ENCODE measurements at regions of chr17 and their contacts with region 1.

Region 1: GRCh38 chr17:48351831-48352332 is 78.1 kb downstream of the SKAP1 start:
- DNase-seq: peak; percentile 16
- H3K4me3 ChIP-seq: no peak overlapping the region
- H3K27ac ChIP-seq: no peak overlapping the region
- H3K4me1 ChIP-seq: peaks cover 3% of the 10 kb centered on the region
- H3K27me3 ChIP-seq: peaks cover 3% of the 10 kb centered on the region
- CTCF ChIP-seq: peak; percentile 51 to 68

Region 2: DNA sequence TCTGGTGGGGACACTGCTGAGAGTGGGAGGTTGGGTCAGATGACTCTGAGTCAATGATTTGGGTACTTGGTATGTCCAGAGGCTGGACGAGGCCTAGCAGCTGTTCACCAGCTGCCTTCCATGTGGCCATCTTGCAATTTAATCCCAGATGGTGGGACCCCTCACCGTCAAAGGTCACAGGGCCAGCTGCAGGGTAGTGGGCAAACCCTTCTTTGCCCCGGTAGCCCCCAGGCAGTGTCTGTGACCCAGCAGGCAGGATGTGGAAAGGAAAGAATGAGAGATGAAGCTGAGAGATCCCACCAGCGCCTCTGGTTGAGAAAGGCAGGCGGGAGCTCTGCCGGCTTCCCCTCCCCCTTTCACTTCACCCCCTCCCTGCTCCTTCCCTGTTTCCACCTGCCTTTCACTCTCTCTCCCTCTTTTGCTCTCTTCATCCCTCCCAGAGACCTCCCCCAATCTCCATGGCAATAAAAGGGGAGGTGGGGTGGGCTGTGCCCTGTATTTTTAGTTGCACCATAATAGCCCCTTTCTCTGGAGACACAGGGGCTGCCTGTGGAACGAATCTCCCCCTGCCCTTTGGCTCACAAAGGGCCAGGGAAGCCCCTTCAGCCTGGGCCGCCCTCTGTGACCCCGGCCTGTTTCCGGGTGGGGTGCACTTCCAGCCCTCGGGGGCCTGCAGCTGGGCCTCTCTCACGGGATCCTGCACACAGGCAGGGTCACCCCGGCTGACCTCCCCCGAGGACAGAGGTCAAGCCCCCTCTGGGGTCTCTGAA is 360.7 kb before region 1 on chr17:
- CTCF ChIA-PET with region 1: no interaction called
- dilution Hi-C with region 1: no loop called
- in situ Hi-C with region 1: no loop called
- intact Hi-C with region 1: no loop called
- DNase-seq: no peak
- H3K4me3 ChIP-seq: no peak overlapping the region
- H3K27ac ChIP-seq: no peak overlapping the region
- H3K4me1 ChIP-seq: no peaks in the 10 kb centered on the region
- H3K27me3 ChIP-seq: no peaks in the 10 kb centered on the region
- CTCF ChIP-seq: no peak

Region 3: GRCh38 chr17:48389903-48390302 is 38.0 kb after region 1 on chr17:
- CTCF ChIA-PET with region 1: interaction called, 10 read pairs
- dilution Hi-C with region 1: no loop called
- in situ Hi-C with region 1: no loop called
- intact Hi-C with region 1: no loop called
- DNase-seq: no peak
- H3K4me3 ChIP-seq: no peak overlapping the region
- H3K27ac ChIP-seq: no peak overlapping the region
- H3K4me1 ChIP-seq: no peaks in the 10 kb centered on the region
- H3K27me3 ChIP-seq: peaks cover 4% of the 10 kb centered on the region
- CTCF ChIP-seq: no peak

Region 4: GRCh38 chr17:48429638-48430586 is 78.0 kb after region 1 on chr17 and contains the start of gene SKAP1:
- CTCF ChIA-PET with region 1: no interaction called
- dilution Hi-C with region 1: no loop called
- in situ Hi-C with region 1: no loop called
- intact Hi-C with region 1: no loop called
- DNase-seq: no peak
- H3K4me3 ChIP-seq: peak within 1 kb of the TSS in 1 of 3 experiments; percentile 22
- H3K27ac ChIP-seq: no peak within 1 kb of the TSS
- H3K4me1 ChIP-seq: peaks cover 6% of the 10 kb centered on the region
- H3K27me3 ChIP-seq: peaks cover 3% of the 10 kb centered on the region
- CTCF ChIP-seq: no peak
- total RNA-seq, gene SKAP1: not detected

Region 5: DNA sequence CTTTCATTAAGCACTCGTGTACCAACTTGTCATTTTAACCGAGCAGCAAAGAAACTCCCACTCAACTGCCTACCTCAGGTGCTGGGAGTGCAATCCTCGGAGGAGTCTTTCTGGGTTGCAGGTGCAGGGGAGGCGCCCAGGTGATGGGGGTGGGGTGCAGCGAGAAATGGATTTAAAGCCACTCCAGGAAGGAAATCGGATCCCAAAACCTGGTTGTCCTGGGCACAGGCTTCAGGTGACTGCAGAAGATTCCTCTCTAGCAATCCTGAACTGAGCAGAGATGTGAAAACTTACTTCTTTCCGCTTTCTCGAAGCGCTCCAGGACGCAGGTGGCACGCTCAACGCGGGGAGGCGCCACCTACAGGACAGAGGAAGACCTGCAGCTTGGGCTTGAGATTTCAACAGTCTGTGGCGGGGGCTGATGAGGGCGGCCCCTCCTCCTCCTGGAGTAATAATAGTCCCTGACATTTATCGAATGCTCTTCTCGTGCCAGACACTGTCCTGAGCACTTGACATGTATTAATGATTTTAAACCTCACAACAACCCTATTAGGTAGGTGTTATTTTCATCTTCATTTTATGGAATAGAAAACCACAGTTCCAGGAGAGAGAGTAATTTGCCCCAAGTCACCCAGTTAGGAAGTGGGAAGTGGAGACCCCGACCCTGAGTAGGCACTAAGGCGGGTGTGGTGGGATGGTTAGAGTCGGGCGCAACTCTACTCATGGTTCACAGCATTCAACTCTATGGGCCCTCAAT is 105.4 kb after region 1 on chr17:
- CTCF ChIA-PET with region 1: no interaction called
- dilution Hi-C with region 1: no loop called
- in situ Hi-C with region 1: no loop called
- intact Hi-C with region 1: loop called (anchors 1 kb)
- DNase-seq: peak; percentile 42
- H3K4me3 ChIP-seq: peak overlapping the region in 2 of 3 experiments; percentile 19 to 28
- H3K27ac ChIP-seq: no peak overlapping the region
- H3K4me1 ChIP-seq: peaks cover 12% of the 10 kb centered on the region
- H3K27me3 ChIP-seq: no peaks in the 10 kb centered on the region
- CTCF ChIP-seq: peak; percentile 94

Region 6: GRCh38 chr17:48492401-48493298 is 140.8 kb after region 1 on chr17:
- CTCF ChIA-PET with region 1: no interaction called
- dilution Hi-C with region 1: no loop called
- in situ Hi-C with region 1: no loop called
- intact Hi-C with region 1: loop called (anchors 5 kb)
- DNase-seq: peak; percentile 56
- H3K4me3 ChIP-seq: peak overlapping the region; percentile 16 to 24 (median 17)
- H3K27ac ChIP-seq: no peak overlapping the region
- H3K4me1 ChIP-seq: peaks cover 18% of the 10 kb centered on the region
- H3K27me3 ChIP-seq: no peaks in the 10 kb centered on the region
- CTCF ChIP-seq: peak; percentile 63 to 87

Measured in mammary epithelial cell (primary cell).